Stomach (tissue), 19 donors: ENCODE measurements at regions of chr5 and their contacts with region 1.

Region 1: DNA sequence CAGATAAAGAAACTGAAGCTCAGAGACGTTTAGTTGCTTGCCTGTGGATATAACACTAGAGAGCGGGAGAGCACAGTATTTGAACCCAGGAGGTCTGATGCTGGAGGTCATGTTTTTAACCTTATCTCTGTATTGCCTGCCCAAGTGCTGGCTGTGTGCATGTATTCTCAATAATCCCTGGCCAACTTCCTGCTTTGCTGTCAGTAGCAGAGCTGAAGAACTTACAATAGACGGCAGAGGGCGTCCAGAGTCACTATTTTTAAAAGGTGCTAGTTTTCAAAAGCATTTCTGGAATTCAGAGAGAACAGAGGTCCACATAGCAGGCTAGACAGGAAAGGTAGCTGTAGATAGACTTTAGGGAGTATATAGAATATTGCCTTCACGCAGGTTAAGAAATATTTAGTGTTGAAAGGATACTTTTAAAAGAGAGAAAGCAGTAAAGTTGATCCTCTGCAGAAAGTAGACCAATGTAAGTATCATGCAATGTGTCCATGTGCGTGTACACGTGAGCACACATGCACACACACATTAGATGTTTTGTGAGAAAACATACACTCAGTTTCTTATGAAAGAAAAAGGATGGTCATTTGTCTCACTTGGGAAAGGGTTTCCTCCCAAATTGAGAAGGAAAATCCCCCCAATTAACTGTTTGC is 46.3 kb downstream of the PTCD2 start:
- DNase-seq: peak; percentile 72 to 92
- H3K4me3 ChIP-seq: no peak overlapping the region
- H3K27ac ChIP-seq: no peak overlapping the region
- H3K4me1 ChIP-seq: peaks cover 0 to 14% (median 6%) of the 10 kb centered on the region in 4 donors
- H3K27me3 ChIP-seq: no peaks in the 10 kb centered on the region
- CTCF ChIP-seq: peak in 5 of 7 experiments; percentile 54 to 76 (median 68)
- EP300 ChIP-seq: no peak
- POLR2A ChIP-seq: no peak

Region 2: DNA sequence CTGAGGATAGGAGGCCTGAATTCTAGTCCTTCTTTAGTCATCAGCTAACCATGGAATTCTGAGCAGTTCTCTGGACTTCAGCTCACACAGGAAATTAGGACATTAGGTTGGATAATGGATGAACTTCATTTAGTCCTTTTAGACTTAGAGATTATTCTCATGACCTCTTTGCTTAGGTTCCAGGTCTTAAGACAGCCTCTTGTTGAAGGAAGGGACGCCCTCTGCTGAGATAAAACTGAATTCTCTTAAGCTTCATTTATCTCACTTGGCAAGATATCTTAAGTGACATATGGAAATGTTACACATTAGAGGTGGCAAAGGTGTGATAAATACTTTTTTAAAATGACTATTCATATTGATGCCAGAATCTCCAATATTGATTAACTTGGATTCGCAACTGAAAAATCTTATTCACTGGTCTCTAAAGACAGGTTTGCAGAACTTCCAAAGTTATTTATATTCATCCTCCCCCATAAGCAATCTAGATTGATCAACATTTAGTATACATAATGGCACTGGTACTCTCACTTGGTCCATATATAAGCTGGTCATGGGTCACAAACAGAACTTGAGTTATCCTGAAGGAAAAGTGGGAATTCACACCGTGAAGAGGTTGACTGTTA is 157.6 kb after region 1 on chr5:
- intact Hi-C with region 1: loop called (anchors 10 kb)
- DNase-seq: peak in 1 of 2 donors; percentile 69
- H3K4me3 ChIP-seq: no peak overlapping the region
- H3K27ac ChIP-seq: no peak overlapping the region
- H3K4me1 ChIP-seq: no peaks in the 10 kb centered on the region
- H3K27me3 ChIP-seq: no peaks in the 10 kb centered on the region
- CTCF ChIP-seq: peak in 3 of 7 experiments; percentile 33 to 50 (median 49)
- EP300 ChIP-seq: no peak
- POLR2A ChIP-seq: no peak

Region 3: GRCh38 chr5:72572236-72572765 is 205.9 kb after region 1 on chr5:
- intact Hi-C with region 1: no loop called
- DNase-seq: no peak
- H3K4me3 ChIP-seq: no peak overlapping the region
- H3K27ac ChIP-seq: no peak overlapping the region
- H3K4me1 ChIP-seq: no peaks in the 10 kb centered on the region
- H3K27me3 ChIP-seq: no peaks in the 10 kb centered on the region
- CTCF ChIP-seq: no peak
- EP300 ChIP-seq: no peak
- POLR2A ChIP-seq: no peak

Region 4: DNA sequence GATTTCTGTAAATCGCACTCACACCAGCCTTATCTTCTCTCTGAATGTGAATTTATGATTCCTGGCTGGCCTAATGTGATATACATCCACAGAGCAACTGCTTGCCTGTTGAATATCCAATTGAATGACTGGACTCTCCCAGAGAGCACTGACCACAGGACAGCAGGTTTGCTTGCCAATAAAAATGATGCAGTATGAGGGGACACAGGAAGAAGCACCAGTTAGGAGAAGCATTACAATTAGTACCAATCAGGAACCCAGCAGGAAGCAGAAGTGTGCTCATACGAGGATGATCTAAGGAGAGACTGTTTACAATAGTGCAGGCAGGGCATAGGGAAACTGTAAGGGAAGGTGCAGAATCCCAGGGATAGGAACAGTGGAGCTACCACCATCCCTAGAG is 268.0 kb after region 1 on chr5:
- intact Hi-C with region 1: no loop called
- DNase-seq: no peak
- H3K4me3 ChIP-seq: no peak overlapping the region
- H3K27ac ChIP-seq: no peak overlapping the region
- H3K4me1 ChIP-seq: peaks cover 0 to 18% (median 4%) of the 10 kb centered on the region in 4 donors
- H3K27me3 ChIP-seq: no peaks in the 10 kb centered on the region
- CTCF ChIP-seq: no peak
- EP300 ChIP-seq: no peak
- POLR2A ChIP-seq: no peak